Breast epithelium (tissue), 4 donors: ENCODE measurements at regions of chr18 and their contacts with region 1.

Region 1: DNA sequence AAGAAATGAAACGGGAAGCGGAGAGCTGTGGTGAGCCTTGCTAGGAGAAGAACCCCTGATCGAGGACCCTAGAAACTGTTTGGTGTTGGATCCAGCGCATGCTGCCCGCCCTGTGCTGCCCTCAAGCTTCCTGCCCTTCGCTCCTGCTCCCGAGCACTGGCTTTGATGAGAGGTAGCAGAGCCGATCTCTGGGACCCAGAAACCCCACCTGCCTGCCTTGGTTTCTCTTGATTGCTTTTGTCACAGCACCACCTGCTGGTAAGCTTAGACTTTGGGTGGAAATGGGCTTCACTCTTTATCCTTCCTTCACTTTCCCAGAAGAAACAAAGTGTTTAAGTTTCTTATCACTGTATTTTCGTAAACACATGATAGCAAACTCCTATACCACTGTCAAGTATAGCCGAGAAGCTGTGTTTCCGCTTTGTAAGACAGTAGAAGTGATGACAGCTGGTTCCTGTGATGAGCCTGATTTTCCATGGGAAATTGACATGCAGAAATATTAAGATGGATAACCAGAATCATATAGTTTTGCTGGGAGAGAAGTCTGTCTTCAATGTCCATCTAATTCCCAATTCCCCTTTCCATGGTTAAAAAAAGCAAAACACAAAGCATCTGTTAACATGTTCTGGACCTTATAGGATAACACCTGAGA is 267.4 kb downstream of the PHLPP1 start:
- DNase-seq: peak in 1 of 2 donors; percentile 38
- H3K4me3 ChIP-seq: peak overlapping the region; percentile 21 to 56 (median 35)
- H3K27ac ChIP-seq: no peak overlapping the region
- H3K4me1 ChIP-seq: peaks cover 0 to 6% of the 10 kb centered on the region in 2 donors
- H3K27me3 ChIP-seq: no peaks in the 10 kb centered on the region
- CTCF ChIP-seq: peak; percentile 53 to 86 (median 70)
- POLR2A ChIP-seq: no peak

Region 2: DNA sequence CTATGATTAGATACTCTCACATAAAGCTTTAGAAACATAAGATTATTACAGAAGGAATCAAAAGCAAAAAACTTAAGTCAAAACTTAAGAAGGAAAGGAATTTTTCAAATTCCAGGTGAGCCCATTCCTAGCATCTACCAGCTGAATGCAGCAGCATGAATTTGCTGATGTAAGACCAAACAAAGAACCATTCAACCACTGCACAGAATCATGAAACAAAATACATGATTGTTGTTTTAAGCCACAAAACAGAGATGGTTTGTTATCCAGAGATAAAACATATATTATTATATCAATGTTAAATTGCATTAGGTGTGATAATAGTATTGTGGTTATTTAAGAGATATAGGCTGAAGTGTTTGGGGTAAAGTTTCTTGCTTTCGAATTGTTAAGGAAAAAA is 824.9 kb before region 1 on chr18:
- intact Hi-C with region 1: no loop called
- DNase-seq: no peak
- H3K4me3 ChIP-seq: no peak overlapping the region
- H3K27ac ChIP-seq: no peak overlapping the region
- H3K4me1 ChIP-seq: no peaks in the 10 kb centered on the region
- H3K27me3 ChIP-seq: no peaks in the 10 kb centered on the region
- CTCF ChIP-seq: no peak
- POLR2A ChIP-seq: no peak

Region 3: DNA sequence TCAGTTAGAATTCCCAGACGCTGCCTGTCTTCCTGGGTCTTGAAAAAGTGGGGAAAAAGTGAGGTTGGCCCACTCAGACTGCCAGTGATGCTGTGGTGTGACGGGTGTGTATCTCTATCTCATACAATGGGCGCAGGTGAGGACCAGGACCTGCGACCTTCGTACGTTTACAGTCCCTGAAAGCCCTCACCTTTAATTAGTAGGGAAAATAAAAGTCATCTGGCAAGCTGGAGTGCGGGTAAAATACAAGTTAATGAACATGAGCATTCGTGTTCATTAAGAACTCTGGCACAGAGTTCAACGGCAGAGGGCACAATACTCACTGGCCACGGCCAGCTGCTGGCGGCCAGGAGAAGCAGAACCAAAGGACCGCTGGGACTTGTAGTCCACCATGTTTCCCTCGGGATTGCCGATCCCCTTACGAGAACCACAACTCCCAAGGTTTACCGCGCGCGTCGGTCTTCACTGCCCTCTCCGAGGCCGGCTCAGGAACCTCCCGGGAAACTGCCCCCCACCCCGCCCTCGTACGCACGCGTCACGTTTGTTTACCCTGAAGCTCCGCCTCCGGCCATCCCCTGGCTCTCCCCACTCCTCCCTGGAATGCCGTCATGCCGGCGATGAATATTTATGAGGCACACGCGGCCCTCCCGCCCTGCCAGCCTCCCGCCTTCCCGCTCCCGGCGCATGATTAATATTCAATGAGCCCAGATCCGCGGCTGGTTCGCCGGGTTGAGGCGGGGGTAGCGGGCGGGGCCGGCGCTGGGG is 267.9 kb before region 1 on chr18:
- intact Hi-C with region 1: loop called (anchors 10 kb)
- DNase-seq: peak; percentile 99 to 100
- H3K4me3 ChIP-seq: peak overlapping the region; percentile 76 to 81 (median 76)
- H3K27ac ChIP-seq: peak overlapping the region; percentile 96 to 99
- H3K4me1 ChIP-seq: no peaks in the 10 kb centered on the region
- H3K27me3 ChIP-seq: no peaks in the 10 kb centered on the region
- CTCF ChIP-seq: peak; percentile 61 to 86 (median 75)
- POLR2A ChIP-seq: no peak